ENCODE measurements at regions of chr3 and their contacts with region 1.

Region 1: GRCh38 chr3:185942907-185943759 is 5.3 kb upstream of the TRA2B start:
- DNase-seq: peak; percentile 51
- ATAC-seq: peak; percentile 98
- H3K4me3 ChIP-seq: no peak overlapping the region
- H3K27ac ChIP-seq: no peak overlapping the region
- H3K4me1 ChIP-seq: peaks cover 5% of the 10 kb centered on the region; the same call in 1 of the 2 replicates
- H3K27me3 ChIP-seq: 0 out of 4 replicates have a peak, but pooled peaks cover 0 to 3% of the 10 kb centered on the region in 2 experiments
- CTCF ChIP-seq: peak; percentile 94 to 99 (median 99)
- EP300 ChIP-seq: no peak
- POLR2A ChIP-seq: no peak
- RAD21 ChIP-seq: peak; percentile 67

Region 2: GRCh38 chr3:185929192-185930151 is 13.7 kb before region 1 on chr3:
- CTCF ChIA-PET with region 1: interaction called, 87 read pairs
- POLR2A ChIA-PET with region 1: interaction called, 10 read pairs
- RAD21 ChIA-PET with region 1: interaction called, 9 read pairs
- SMC1A ChIA-PET with region 1: interaction called, 20 read pairs
- in situ Hi-C with region 1: no loop called
- intact Hi-C with region 1: no loop called
- DNase-seq: no peak
- ATAC-seq: peak; percentile 20; the same call in 2 of the 3 replicates
- H3K4me3 ChIP-seq: peak overlapping the region; percentile 59
- H3K27ac ChIP-seq: peak overlapping the region; percentile 13; the same call in 1 of the 2 replicates
- H3K4me1 ChIP-seq: peaks cover 23% of the 10 kb centered on the region
- H3K27me3 ChIP-seq: no peaks in the 10 kb centered on the region
- CTCF ChIP-seq: no peak
- EP300 ChIP-seq: no peak
- POLR2A ChIP-seq: no peak
- RAD21 ChIP-seq: no peak

Region 3: GRCh38 chr3:185976977-185977678 is 34.0 kb after region 1 on chr3:
- CTCF ChIA-PET with region 1: interaction called, 60 read pairs
- POLR2A ChIA-PET with region 1: interaction called, 4 read pairs
- RAD21 ChIA-PET with region 1: interaction called, 19 read pairs
- SMC1A ChIA-PET with region 1: interaction called, 24 read pairs
- in situ Hi-C with region 1: no loop called
- intact Hi-C with region 1: no loop called
- DNase-seq: peak; percentile 42
- ATAC-seq: peak; percentile 100
- H3K4me3 ChIP-seq: no peak overlapping the region
- H3K27ac ChIP-seq: no peak overlapping the region
- H3K4me1 ChIP-seq: peaks cover 4% of the 10 kb centered on the region; the same call in 1 of the 2 replicates
- H3K27me3 ChIP-seq: no peaks in the 10 kb centered on the region
- CTCF ChIP-seq: peak; percentile 85 to 93 (median 90)
- EP300 ChIP-seq: no peak
- POLR2A ChIP-seq: no peak
- RAD21 ChIP-seq: peak; percentile 76

Region 4: DNA sequence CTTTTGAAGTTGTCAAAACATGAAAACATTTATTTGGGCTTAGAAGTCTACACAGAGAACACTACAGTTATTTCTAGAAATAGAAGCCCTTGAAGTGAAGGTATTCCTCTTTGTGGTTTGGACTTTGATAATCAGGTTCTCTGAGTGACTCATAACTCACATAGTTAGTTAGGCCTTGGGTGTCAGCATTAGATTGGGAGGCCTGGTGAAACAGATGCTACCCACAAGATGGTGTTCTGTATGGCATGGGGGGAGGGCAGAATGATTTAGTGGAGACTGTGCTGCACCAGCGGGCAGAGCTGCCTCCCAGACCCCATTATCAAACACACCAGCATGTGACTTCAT is 274.7 kb after region 1 on chr3:
- CTCF ChIA-PET with region 1: interaction called, 10 read pairs
- POLR2A ChIA-PET with region 1: no interaction called
- RAD21 ChIA-PET with region 1: interaction called, 4 read pairs
- SMC1A ChIA-PET with region 1: no interaction called
- in situ Hi-C with region 1: no loop called
- intact Hi-C with region 1: no loop called
- DNase-seq: peak; percentile 63
- ATAC-seq: peak; percentile 97
- H3K4me3 ChIP-seq: no peak overlapping the region
- H3K27ac ChIP-seq: peak overlapping the region; percentile 57
- H3K4me1 ChIP-seq: peaks cover 26% of the 10 kb centered on the region
- H3K27me3 ChIP-seq: no peaks in the 10 kb centered on the region; a peak in 1 of 4 replicates
- CTCF ChIP-seq: no peak
- EP300 ChIP-seq: peak; percentile 52 to 67; a peak in 3 of 4 replicates
- POLR2A ChIP-seq: no peak
- RAD21 ChIP-seq: no peak

Region 5: GRCh38 chr3:186259612-186260383 is 316.7 kb after region 1 on chr3:
- CTCF ChIA-PET with region 1: interaction called, 27 read pairs
- POLR2A ChIA-PET with region 1: interaction called, 4 read pairs
- RAD21 ChIA-PET with region 1: interaction called, 8 read pairs
- SMC1A ChIA-PET with region 1: interaction called, 6 read pairs
- in situ Hi-C with region 1: no loop called
- intact Hi-C with region 1: no loop called
- DNase-seq: no peak
- ATAC-seq: peak; percentile 89
- H3K4me3 ChIP-seq: no peak overlapping the region
- H3K27ac ChIP-seq: no peak overlapping the region
- H3K4me1 ChIP-seq: peaks cover 14% of the 10 kb centered on the region
- H3K27me3 ChIP-seq: no peaks in the 10 kb centered on the region
- CTCF ChIP-seq: peak; percentile 96 to 99 (median 97)
- EP300 ChIP-seq: no peak
- POLR2A ChIP-seq: no peak
- RAD21 ChIP-seq: peak; percentile 94

Region 6: DNA sequence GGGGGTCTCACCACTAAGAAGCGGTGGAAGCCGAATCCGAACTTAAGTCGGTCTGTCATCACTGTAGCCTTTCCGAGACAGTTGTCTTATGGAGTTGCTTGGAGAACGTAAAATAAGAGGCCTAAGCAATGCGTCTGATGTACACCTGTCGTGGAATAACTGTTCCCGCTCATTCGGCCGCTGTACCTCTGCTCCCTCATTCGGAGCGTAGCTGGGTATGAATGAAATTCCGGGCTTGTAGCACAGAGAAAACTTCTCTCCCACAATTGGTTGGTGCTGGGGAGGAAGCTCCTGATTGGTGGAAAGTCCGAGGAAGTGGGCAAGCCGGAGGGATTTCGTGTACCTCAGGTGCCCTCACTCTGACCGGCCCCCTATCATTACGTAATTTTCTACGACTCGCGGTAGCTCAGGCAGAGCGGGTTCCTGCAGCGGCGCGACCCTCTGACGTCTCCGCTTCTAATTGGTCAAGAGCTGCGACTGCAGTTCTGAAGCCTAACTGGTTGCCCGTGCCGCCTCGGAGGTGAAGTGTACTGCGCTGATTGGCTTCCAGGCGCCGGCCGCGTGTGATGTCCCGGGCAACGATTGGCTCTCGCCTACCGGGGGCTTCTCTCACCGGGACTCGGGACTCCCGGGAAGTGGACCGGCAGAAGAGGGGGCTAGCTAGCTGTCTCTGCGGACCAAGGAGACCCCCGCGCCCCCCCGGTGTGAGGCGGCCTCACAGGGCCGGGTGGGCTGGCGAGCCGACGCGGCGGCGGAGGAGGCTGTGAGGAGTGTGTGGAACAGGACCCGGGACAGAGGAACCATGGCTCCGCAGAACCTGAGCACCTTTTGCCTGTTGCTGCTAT is 627.2 kb after region 1 on chr3 and contains the start of gene DNAJB11:
- CTCF ChIA-PET with region 1: interaction called, 11 read pairs
- POLR2A ChIA-PET with region 1: interaction called, 8 read pairs
- RAD21 ChIA-PET with region 1: interaction called, 5 read pairs
- SMC1A ChIA-PET with region 1: interaction called, 4 read pairs
- in situ Hi-C with region 1: no loop called
- intact Hi-C with region 1: loop called (anchors 5 kb)
- DNase-seq: peak; percentile 98
- ATAC-seq: peak; percentile 90
- H3K4me3 ChIP-seq: peak within 1 kb of the TSS; percentile 90
- H3K27ac ChIP-seq: peak within 1 kb of the TSS; percentile 85
- H3K4me1 ChIP-seq: peaks cover 10% of the 10 kb centered on the region
- H3K27me3 ChIP-seq: no peaks in the 10 kb centered on the region
- CTCF ChIP-seq: no peak
- EP300 ChIP-seq: no peak
- POLR2A ChIP-seq: peak; percentile 92
- RAD21 ChIP-seq: no peak
- polyA plus RNA-seq, gene DNAJB11: 16.2 to 26.4 TPM